Heart right ventricle (tissue), 16 donors: ENCODE measurements at regions of chr15 and their contacts with region 1.

Region 1: GRCh38 chr15:71730277-71731144 is 79.8 kb upstream of the NR2E3 start:
- DNase-seq: peak in 1 of 2 donors; percentile 64
- ATAC-seq: peak; percentile 76 to 89 (median 84)
- H3K4me3 ChIP-seq: no peak overlapping the region
- H3K27ac ChIP-seq: peak overlapping the region in 5 of 10 donors; percentile 5 to 52 (median 42)
- H3K4me1 ChIP-seq: peaks cover 0 to 39% (median 10%) of the 10 kb centered on the region in 9 donors
- H3K27me3 ChIP-seq: no peaks in the 10 kb centered on the region
- CTCF ChIP-seq: peak; percentile 47 to 89 (median 80)

Region 2: DNA sequence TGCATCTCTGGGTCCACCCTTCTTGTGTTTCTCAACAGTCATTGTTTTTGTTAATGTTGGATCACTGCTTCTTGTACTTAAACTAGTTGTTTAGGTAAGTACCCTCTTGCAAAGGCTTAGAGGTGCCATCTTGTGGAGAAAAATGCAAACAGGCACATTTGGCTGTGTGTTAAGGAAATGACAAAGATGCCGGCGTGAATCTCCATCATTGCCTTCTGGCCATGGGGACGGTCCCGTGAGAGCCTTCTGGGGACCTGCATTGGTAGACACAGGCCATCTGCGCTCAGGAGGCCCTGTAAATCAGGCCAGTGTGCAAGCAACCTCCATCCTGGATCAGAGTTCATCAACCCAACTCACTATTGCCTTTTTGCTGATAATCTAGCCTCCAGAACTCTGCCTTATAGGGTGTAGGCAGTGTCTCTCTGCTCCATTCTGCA is 78.7 kb before region 1 on chr15:
- intact Hi-C with region 1: loop called in 2 of 10 experiments (anchors 5 kb)
- DNase-seq: no peak
- ATAC-seq: peak in 5 of 8 donors; percentile 31 to 43 (median 35)
- H3K4me3 ChIP-seq: no peak overlapping the region
- H3K27ac ChIP-seq: peak overlapping the region in 2 of 10 donors; percentile 15 to 27
- H3K4me1 ChIP-seq: peaks cover 5 to 57% (median 26%) of the 10 kb centered on the region in 9 donors
- H3K27me3 ChIP-seq: no peaks in the 10 kb centered on the region
- CTCF ChIP-seq: peak in 8 of 9 donors; percentile 18 to 59 (median 40)

Region 3: DNA sequence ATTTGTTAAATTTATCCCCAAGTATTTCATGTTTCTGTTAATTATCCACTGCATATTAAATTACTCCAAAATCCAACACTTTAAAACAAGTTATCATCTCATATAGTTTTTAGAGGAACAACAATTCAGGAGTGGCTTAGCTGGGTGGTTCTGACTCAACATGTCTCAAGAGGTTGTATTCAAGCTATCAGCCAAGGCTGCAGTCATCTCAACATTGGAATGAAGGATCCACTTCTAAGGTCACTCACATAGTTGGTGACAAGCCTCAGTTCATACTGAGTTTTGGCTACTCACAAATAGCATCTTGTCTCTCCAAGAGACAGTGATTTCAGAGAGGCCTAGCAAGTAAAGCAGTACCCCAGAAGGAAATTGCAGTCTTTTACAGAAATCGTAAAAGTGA is 214.5 kb after region 1 on chr15:
- intact Hi-C with region 1: no loop called
- DNase-seq: no peak
- ATAC-seq: no peak
- H3K4me3 ChIP-seq: no peak overlapping the region
- H3K27ac ChIP-seq: no peak overlapping the region
- H3K4me1 ChIP-seq: no peaks in the 10 kb centered on the region
- H3K27me3 ChIP-seq: no peaks in the 10 kb centered on the region
- CTCF ChIP-seq: no peak